Endothelial cell of umbilical vein (primary cell): ENCODE measurements at regions of chr11 and their contacts with region 1.

Region 1: GRCh38 chr11:30538251-30538650 is 47.9 kb downstream of the MPPED2 start:
- DNase-seq: no peak
- H3K4me3 ChIP-seq: no peak overlapping the region
- H3K27ac ChIP-seq: no peak overlapping the region
- H3K4me1 ChIP-seq: no peaks in the 10 kb centered on the region
- H3K27me3 ChIP-seq: no peaks in the 10 kb centered on the region
- CTCF ChIP-seq: no peak
- POLR2A ChIP-seq: no peak

Region 2: GRCh38 chr11:29844701-29845379 is 693.4 kb before region 1 on chr11:
- CTCF ChIA-PET with region 1: no interaction called
- POLR2A ChIA-PET with region 1: no interaction called
- dilution Hi-C with region 1: no loop called
- intact Hi-C with region 1: no loop called
- DNase-seq: no peak
- H3K4me3 ChIP-seq: no peak overlapping the region
- H3K27ac ChIP-seq: no peak overlapping the region
- H3K4me1 ChIP-seq: no peaks in the 10 kb centered on the region
- H3K27me3 ChIP-seq: no peaks in the 10 kb centered on the region
- CTCF ChIP-seq: no peak
- POLR2A ChIP-seq: no peak

Region 3: DNA sequence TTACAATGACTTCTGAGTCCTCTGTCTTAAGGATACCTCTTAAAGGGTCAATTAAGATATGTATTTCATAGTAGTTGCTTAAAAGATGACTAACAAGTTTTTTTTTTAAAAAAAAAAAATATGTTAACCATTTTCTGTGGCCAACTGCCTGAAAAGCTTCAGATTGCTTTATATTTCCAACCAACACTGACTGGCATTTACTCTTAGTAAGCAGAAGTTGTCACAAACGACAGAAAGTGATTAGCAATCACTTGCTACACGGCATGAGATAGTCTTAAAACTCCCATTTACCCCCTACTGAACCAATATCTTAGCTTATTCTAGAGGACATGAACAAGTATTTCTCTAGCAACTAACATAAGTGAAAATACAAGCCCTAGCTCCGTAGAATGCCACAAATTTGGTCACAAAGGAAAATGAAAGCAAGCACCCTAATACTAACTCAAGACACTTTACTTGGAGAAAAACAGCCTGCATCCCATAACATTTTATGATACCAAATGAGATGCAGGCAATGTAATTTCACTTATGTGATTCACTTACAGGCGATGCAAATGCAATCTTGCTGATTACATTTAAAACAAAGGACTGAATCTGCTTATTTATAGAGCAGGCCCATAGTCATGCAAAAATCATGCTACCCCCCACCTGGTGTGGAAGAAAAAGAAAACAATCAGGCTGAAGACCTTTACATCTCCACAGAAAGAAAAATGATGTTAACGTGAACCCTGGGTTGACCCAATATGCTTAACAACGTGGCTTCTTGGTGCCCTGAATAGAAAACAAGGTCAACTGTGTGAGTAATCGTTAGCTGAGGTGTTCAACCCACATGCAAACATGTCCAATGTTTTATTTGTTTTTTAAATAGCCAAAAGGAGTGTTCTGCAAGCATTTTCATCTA is 22.2 kb after region 1 on chr11:
- CTCF ChIA-PET with region 1: no interaction called
- POLR2A ChIA-PET with region 1: no interaction called
- dilution Hi-C with region 1: no loop called
- intact Hi-C with region 1: loop called (anchors 1 kb)
- DNase-seq: no peak
- H3K4me3 ChIP-seq: no peak overlapping the region
- H3K27ac ChIP-seq: no peak overlapping the region
- H3K4me1 ChIP-seq: no peaks in the 10 kb centered on the region
- H3K27me3 ChIP-seq: no peaks in the 10 kb centered on the region
- CTCF ChIP-seq: no peak
- POLR2A ChIP-seq: no peak